ENCODE measurements at regions of chr19 and their contacts with region 1.

Region 1: DNA sequence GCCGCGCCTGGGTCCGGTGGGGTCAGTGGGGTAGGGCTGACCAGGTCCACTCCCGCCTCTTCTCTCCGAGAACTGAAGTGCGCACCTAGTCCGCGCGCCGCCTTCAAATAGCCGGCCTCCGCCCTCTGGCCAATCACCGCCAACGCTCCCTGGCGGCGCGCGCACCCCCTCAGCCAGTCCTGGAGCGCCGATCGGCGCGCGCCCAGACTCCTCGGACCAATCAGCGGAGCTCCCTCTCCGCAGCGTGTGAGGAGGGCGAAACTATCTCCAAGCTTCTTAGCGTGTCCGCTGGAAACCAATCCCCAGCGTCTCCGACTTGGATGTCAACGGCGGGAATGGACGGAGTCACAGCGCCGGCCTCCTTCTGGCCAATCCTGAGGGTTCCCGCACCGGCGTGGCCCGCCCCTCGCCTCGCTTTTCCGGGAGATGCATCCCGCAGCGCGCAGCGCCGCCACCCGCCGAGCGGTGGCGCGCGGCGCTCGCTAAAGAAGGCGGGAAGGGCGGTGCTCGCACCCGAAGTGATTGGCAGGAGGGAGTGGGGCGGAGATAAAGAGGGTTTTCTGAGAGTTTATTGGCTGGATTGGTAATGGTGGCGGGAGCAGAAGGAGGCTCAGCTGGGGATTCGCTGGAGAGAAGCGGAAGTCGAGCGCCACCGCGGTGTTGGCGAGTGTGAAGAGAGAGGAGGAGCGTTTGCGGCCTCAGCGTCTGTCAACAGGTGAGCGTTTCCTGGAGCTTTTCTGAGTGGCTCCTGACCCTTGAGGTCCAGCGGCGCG is at the start of gene ASF1B:
- DNase-seq: peak; percentile 99
- H3K4me3 Mint-ChIP-seq: peak within 1 kb of the TSS; percentile 83
- H3K27ac Mint-ChIP-seq: peak within 1 kb of the TSS; percentile 91
- H3K4me1 Mint-ChIP-seq: peaks cover 41% of the 10 kb centered on the region
- H3K27me3 Mint-ChIP-seq: no peaks in the 10 kb centered on the region
- total RNA-seq, gene ASF1B: 54.7 to 56.6 TPM

Region 2: DNA sequence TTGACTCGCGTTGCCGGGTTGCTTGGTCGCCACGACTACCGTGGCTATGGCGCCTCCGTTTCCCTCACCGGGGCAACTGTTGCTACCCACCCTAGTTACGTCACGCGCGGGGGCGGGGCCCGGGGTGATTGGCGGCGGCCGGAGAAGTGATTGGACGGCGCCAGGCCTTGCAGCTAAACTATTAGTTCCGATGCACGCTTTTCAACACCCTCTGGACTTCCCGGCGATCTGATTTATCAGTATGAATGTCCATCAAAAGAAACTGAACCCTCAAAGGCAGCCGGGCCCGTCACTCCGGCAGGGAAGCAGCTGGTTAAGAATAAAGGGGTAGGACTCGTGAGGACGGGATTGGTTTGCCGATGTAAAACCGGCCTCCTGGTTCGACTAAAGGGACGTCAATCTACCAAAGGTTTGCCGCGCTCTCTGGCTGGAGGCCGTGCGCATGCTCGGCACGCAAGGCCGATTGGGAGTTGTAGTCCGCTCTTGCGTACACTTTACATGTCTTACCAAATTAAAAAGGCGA is 130.4 kb before region 1 on chr19 and contains the start of gene RFX1:
- CTCF ChIA-PET with region 1: no interaction called
- intact Hi-C with region 1: loop called (anchors 1 kb)
- DNase-seq: peak; percentile 100
- H3K4me3 Mint-ChIP-seq: peak within 1 kb of the TSS; percentile 90
- H3K27ac Mint-ChIP-seq: peak within 1 kb of the TSS; percentile 96
- H3K4me1 Mint-ChIP-seq: peaks cover 39% of the 10 kb centered on the region
- H3K27me3 Mint-ChIP-seq: no peaks in the 10 kb centered on the region
- total RNA-seq, gene RFX1: 13.8 to 14.0 TPM

Region 3: GRCh38 chr19:14091081-14091812 is 45.4 kb before region 1 on chr19:
- CTCF ChIA-PET with region 1: interaction called, 5 read pairs
- intact Hi-C with region 1: loop called (anchors 1 kb)
- DNase-seq: peak; percentile 78
- H3K4me3 Mint-ChIP-seq: peak overlapping the region; percentile 96
- H3K27ac Mint-ChIP-seq: peak overlapping the region; percentile 97
- H3K4me1 Mint-ChIP-seq: peaks cover 24% of the 10 kb centered on the region
- H3K27me3 Mint-ChIP-seq: no peaks in the 10 kb centered on the region

Region 4: GRCh38 chr19:14198384-14199376 is 62.0 kb after region 1 on chr19:
- CTCF ChIA-PET with region 1: interaction called, 9 read pairs
- intact Hi-C with region 1: loop called (anchors 5 kb)
- DNase-seq: no peak
- H3K4me3 Mint-ChIP-seq: no peak overlapping the region
- H3K27ac Mint-ChIP-seq: no peak overlapping the region
- H3K4me1 Mint-ChIP-seq: peaks cover 22% of the 10 kb centered on the region
- H3K27me3 Mint-ChIP-seq: no peaks in the 10 kb centered on the region

Region 5: DNA sequence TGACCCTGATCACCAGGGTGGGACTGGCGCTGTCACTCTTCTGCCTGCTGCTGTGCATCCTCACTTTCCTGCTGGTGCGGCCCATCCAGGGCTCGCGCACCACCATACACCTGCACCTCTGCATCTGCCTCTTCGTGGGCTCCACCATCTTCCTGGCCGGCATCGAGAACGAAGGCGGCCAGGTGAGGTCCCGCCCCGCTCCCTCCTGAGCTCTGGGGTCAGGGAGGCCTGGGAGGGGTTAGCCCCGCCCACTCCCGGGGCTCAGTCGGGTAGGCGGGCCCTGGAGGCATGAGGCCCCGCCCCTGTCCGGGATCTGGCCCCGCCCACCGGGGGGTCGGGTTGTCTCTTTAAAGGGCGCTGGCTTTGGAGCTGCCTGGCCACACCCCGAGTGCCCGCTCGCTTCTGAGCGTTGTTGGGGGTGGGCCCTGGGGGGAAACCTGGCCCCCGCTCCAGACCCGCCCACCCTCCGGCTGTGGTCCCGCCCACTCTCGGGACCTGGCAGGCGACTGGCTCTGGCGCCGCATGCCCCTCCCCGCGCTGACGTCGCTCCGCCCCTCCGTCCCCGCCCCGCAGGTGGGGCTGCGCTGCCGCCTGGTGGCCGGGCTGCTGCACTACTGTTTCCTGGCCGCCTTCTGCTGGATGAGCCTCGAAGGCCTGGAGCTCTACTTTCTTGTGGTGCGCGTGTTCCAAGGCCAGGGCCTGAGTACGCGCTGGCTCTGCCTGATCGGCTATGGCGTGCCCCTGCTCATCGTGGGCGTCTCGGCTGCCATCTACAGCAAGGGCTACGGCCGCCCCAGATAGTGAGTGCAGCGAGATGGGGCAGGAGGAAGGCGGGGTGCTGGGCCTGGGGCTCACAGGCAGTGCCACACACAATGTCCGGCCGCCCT is 269.3 kb after region 1 on chr19:
- CTCF ChIA-PET with region 1: interaction called, 3 read pairs
- intact Hi-C with region 1: loop called (anchors 1 kb)
- DNase-seq: peak; percentile 91
- H3K4me3 Mint-ChIP-seq: no peak overlapping the region
- H3K27ac Mint-ChIP-seq: peak overlapping the region; percentile 46
- H3K4me1 Mint-ChIP-seq: peaks cover 26% of the 10 kb centered on the region
- H3K27me3 Mint-ChIP-seq: no peaks in the 10 kb centered on the region

Region 6: GRCh38 chr19:14517840-14518505 is 381.3 kb after region 1 on chr19 and contains the start of gene DNAJB1:
- CTCF ChIA-PET with region 1: no interaction called
- intact Hi-C with region 1: loop called (anchors 1 kb)
- DNase-seq: peak; percentile 70
- H3K4me3 Mint-ChIP-seq: peak within 1 kb of the TSS; percentile 89
- H3K27ac Mint-ChIP-seq: peak within 1 kb of the TSS; percentile 92
- H3K4me1 Mint-ChIP-seq: peaks cover 63% of the 10 kb centered on the region
- H3K27me3 Mint-ChIP-seq: no peaks in the 10 kb centered on the region
- total RNA-seq, gene DNAJB1: 48.1 to 49.5 TPM